Endothelial cell of umbilical vein (primary cell): ENCODE measurements at regions of chr20 and their contacts with region 1.

Region 1: GRCh38 chr20:20637998-20638725 is 74.3 kb downstream of the RALGAPA2 start:
- DNase-seq: no peak
- H3K4me3 ChIP-seq: no peak overlapping the region
- H3K27ac ChIP-seq: no peak overlapping the region
- H3K4me1 ChIP-seq: no peaks in the 10 kb centered on the region
- H3K27me3 ChIP-seq: no peaks in the 10 kb centered on the region
- CTCF ChIP-seq: no peak
- POLR2A ChIP-seq: no peak

Region 2: DNA sequence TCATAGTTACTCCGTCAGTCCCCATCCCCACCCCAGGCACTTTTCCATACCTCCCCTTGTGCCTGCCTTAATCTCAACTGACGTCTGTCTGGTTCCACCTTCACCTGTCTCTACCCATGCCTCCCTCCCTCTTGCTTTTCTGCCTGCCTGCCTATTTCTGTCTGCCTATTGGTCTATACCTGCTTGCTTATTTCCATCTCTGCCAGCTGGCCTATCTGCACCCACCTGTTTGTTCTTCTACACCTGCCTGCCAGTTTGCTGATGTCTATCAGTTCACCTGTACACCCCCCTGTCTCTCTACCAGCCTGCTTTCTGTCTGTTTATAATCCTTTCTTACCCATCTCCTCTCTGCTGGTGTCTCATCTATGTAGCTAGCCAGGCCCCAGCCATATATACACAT is 13.2 kb before region 1 on chr20:
- CTCF ChIA-PET with region 1: no interaction called
- POLR2A ChIA-PET with region 1: interaction called, 11 read pairs
- dilution Hi-C with region 1: no loop called
- intact Hi-C with region 1: no loop called
- DNase-seq: no peak
- H3K4me3 ChIP-seq: no peak overlapping the region
- H3K27ac ChIP-seq: no peak overlapping the region
- H3K4me1 ChIP-seq: no peaks in the 10 kb centered on the region
- H3K27me3 ChIP-seq: no peaks in the 10 kb centered on the region
- CTCF ChIP-seq: no peak
- POLR2A ChIP-seq: no peak

Region 3: DNA sequence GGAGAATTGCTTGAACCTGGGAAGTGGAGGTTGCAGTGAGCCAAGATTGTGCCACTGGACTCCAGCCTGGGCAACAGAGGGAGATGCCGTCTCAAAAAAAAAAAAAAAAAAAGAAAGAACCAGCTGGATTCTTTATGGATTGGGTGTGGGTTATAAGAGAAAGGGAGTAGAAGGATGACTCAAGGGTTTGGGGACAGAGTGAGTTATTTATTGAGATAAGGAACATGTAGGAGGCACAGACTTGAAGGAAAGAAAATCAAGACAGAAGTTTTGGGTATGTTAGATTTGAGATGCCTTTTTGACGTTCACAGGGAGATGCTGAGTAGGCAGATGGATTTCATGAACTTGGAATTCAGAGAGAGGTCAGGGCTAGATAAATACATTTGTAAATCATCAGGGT is 535.3 kb after region 1 on chr20:
- CTCF ChIA-PET with region 1: no interaction called
- POLR2A ChIA-PET with region 1: no interaction called
- dilution Hi-C with region 1: no loop called
- intact Hi-C with region 1: no loop called
- DNase-seq: no peak
- H3K4me3 ChIP-seq: no peak overlapping the region
- H3K27ac ChIP-seq: no peak overlapping the region
- H3K4me1 ChIP-seq: no peaks in the 10 kb centered on the region
- H3K27me3 ChIP-seq: no peaks in the 10 kb centered on the region
- CTCF ChIP-seq: no peak
- POLR2A ChIP-seq: no peak